Activated CD8-positive, alpha-beta memory T cell treated with anti-CD3 and anti-CD28 coated beads, Interleukin-2, amount 10 ng/mL, durations not matched to agents 7 days and 5 days (primary cell): ENCODE measurements at regions of chr1 and their contacts with region 1.

Region 1: DNA sequence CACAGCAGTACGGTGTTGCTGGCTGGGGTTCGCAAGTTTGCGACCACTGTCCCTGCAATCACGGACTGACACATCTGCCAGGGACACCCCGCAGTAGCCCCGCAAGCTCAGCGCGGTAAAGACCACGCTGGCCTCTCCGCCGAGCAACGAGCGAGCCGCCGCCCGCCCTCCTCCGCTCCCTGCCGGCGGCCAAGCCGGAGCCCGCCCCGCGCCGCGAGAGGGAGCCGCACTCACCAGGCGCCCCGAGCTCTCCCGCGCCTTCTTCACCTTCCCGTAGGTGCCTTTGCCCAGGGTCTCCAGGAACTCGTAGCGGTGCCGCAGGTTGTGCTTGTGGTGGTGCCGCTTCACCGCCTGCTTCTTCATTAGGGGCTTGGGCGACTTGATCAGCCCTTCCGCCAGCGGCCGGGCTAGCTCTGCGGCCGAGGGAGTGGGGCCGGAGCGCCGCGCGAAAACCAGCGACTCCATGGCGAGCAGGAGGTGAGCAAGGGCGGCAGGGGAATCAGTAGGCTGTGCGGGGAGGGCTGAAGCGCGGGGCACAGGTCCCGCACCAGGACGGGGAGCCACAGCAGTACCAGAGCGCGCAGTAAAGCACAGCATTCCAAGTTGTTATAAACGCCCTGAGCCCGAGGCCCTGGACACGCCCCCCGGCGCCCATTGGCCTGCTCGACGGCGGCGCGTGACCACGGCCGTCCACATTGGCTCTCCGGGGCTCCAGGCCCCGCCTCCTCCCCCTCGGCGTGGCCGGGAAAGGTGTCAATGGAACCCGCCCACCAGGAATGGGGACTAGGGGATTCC is at the start of gene NUAK2:
- DNase-seq: peak; percentile 83
- ATAC-seq: peak; percentile 91
- H3K4me3 Mint-ChIP-seq: peak within 1 kb of the TSS; percentile 88
- H3K27ac Mint-ChIP-seq: peak within 1 kb of the TSS; percentile 68
- H3K4me1 Mint-ChIP-seq: peaks cover 48% of the 10 kb centered on the region
- H3K27me3 Mint-ChIP-seq: peaks cover 19% of the 10 kb centered on the region
- total RNA-seq, gene NUAK2: 1.9 to 6.0 TPM

Region 2: DNA sequence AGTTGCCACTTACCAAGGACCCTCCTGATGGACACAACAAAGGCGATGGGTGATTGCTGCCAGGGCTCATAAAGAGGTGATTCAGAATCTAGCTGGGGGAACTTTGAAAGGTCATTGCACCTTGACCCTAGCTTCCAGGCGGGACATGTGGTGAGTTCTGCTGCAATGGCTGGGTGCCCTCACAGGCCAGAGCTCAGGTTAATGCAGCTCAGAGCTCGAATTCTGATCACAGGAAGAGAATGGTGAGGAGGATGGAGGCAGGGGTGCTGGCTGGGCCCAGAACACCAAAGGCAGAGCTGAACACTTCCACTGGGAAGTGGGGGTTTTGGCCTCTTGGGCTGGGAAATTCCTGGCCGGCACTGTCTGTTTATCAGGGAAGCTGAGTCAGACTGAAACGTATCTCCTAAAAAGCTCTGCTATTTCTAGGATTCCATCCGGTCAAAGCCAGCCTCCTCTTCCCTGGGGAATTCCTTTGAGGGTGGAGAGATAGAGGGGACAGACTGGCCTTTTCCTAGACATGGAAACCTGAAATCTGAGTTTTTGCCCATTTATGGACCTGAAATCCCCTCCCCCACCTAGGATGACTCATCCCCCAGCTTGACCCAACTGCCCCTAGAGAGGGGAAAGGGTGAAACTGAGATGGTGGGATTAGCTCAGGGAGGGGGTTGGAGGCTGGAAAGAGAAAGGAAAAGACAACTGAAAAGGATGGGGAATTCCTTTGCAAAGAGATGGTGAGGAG is 27.0 kb before region 1 on chr1:
- CTCF ChIA-PET with region 1: interaction called, 1,096 read pairs
- DNase-seq: no peak
- ATAC-seq: no peak
- H3K4me3 Mint-ChIP-seq: no peak overlapping the region
- H3K27ac Mint-ChIP-seq: no peak overlapping the region
- H3K4me1 Mint-ChIP-seq: peaks cover 16% of the 10 kb centered on the region
- H3K27me3 Mint-ChIP-seq: peaks cover 11% of the 10 kb centered on the region

Region 3: DNA sequence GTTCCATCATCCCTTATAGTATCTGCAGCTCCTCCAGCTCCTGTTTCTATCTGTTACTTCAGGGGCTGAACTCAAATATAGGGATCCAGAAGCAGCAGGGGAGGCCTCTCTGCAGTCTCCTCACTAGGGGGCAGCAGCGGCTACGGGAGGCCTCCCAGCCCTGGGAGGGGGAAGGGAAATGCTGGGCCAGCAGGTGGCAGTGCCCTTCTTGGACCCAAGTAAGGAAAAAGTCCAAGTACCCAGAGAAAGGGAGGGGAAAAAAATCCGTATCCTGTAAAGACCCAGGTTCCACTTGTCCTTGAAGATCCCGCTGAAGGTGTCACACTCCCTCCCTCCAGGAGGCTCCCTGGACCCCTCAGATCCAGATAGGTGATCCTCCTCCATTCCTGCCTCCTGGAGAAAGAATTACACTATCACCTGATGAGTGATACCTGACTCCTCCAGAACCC is 14.3 kb after region 1 on chr1:
- CTCF ChIA-PET with region 1: interaction called, 108 read pairs
- DNase-seq: peak; percentile 84
- ATAC-seq: peak; percentile 82
- H3K4me3 Mint-ChIP-seq: no peak overlapping the region
- H3K27ac Mint-ChIP-seq: no peak overlapping the region
- H3K4me1 Mint-ChIP-seq: peaks cover 18% of the 10 kb centered on the region
- H3K27me3 Mint-ChIP-seq: peaks cover 46% of the 10 kb centered on the region

Region 4: DNA sequence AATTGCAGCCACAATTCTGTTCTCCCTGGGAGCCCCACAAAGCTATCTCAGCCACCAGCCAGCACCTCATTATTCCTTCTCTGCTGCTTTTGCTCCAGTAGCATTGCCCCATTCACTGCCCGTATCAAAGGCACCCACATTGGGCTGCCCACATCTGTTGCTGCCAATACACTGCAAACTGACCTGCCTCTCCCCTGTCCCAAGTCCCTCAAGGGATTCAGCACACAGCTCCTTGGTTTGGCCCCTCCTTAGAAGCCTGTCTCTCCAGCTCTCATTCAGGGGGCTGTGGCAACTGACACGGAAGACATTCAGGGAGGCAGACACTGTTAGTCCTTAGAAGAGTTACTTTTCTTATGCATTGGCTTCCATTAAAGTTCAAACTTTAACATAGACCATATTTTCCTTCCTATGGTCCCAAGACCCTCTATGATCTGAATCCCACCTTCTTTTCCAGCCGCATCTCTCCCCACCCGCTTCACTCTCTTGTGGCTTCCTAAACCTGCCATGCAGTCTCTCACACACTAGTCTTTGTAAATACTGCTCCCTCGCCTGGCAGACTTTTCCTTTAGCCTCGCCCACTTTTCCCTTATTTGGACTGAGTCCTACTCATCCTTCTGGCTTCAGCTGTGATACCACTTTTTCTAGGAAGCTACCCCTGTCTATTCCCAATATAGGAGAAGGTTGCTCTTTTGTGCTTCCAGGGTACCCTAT is 54.6 kb after region 1 on chr1:
- CTCF ChIA-PET with region 1: no interaction called
- DNase-seq: no peak
- ATAC-seq: no peak
- H3K4me3 Mint-ChIP-seq: no peak overlapping the region
- H3K27ac Mint-ChIP-seq: no peak overlapping the region
- H3K4me1 Mint-ChIP-seq: peaks cover 5% of the 10 kb centered on the region
- H3K27me3 Mint-ChIP-seq: peaks cover 53% of the 10 kb centered on the region